CD4-positive, alpha-beta T cell (primary cell): ENCODE measurements at regions of chr3 and their contacts with region 1.

Region 1: DNA sequence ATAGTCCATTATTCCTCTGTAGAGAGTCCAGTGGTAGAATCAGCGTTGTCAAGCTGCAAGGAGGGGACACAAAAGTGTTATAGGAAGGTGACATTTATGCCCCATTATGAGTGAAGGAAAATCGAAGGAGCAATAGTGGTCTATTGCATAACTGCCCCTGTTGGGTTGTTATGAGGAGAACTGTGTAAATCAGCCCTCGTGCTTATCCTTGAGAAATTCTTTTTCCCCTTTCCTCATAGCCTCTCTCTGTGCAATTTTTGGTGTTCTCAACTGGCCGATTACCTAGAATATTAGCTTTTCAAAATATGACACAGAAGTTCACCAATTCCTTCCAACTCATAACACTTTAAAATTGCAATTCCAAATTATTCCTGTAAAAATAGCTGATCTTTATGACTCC is 286.6 kb downstream of the RBMS3 start:
- DNase-seq: no peak
- ATAC-seq: no peak
- H3K4me3 ChIP-seq: no peak overlapping the region
- H3K4me3 Mint-ChIP-seq: no peak overlapping the region
- H3K27ac ChIP-seq: no peak overlapping the region
- H3K27ac Mint-ChIP-seq: no peak overlapping the region
- H3K4me1 ChIP-seq: no peaks in the 10 kb centered on the region
- H3K4me1 Mint-ChIP-seq: no peaks in the 10 kb centered on the region
- H3K27me3 ChIP-seq: no peaks in the 10 kb centered on the region
- H3K27me3 Mint-ChIP-seq: no peaks in the 10 kb centered on the region
- CTCF ChIP-seq: no peak

Region 2: DNA sequence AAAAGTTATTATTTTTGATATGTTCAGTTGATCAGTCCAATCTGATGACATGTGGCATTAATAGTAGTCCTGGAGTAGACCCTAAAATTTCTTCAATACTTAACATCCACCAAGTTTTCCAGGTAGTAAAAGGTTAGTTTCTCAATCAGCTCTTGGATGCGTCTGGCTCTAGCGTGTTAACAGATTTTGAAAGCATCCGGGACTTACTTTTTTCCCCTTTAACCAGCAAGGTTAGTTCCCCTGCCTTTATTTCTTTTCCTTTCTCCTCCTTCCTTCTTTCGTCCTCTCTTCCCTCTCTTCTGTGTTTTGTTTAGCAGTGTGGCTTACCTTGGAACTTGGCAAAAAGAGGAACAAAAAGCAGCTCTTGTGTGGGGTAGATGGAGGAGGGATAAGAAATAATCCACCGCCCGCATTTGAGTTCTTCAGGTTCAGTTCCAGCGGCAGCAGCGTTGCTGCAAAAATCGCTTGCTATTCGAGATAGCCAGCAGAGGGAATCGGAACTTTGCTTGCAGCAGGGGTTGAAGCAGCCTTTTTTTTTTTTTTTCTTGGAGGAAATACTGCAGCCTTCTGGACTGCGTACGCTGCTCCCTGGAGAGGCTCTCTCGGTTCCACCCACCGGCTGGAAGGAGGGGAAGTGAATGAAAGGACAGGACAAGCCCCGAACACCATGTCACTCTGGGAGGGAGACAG is 287.0 kb before region 1 on chr3 and contains the start of gene RBMS3:
- CTCF ChIA-PET with region 1: no interaction called
- POLR2A ChIA-PET with region 1: no interaction called
- intact Hi-C with region 1: no loop called
- DNase-seq: peak in 5 of 14 experiments; percentile 6 to 44 (median 33)
- ATAC-seq: peak; percentile 57
- H3K4me3 ChIP-seq: peak within 1 kb of the TSS; percentile 48
- H3K4me3 Mint-ChIP-seq: peak within 1 kb of the TSS; percentile 75
- H3K27ac ChIP-seq: no peak within 1 kb of the TSS
- H3K27ac Mint-ChIP-seq: peak within 1 kb of the TSS; percentile 59
- H3K4me1 ChIP-seq: peaks cover 10% of the 10 kb centered on the region
- H3K4me1 Mint-ChIP-seq: peaks cover 28% of the 10 kb centered on the region
- H3K27me3 ChIP-seq: peaks cover 0 to 3% of the 10 kb centered on the region in 2 experiments
- H3K27me3 Mint-ChIP-seq: peaks cover 10% of the 10 kb centered on the region
- CTCF ChIP-seq: no peak
- total RNA-seq, gene RBMS3: 1.6 to 1.7 TPM

Region 3: DNA sequence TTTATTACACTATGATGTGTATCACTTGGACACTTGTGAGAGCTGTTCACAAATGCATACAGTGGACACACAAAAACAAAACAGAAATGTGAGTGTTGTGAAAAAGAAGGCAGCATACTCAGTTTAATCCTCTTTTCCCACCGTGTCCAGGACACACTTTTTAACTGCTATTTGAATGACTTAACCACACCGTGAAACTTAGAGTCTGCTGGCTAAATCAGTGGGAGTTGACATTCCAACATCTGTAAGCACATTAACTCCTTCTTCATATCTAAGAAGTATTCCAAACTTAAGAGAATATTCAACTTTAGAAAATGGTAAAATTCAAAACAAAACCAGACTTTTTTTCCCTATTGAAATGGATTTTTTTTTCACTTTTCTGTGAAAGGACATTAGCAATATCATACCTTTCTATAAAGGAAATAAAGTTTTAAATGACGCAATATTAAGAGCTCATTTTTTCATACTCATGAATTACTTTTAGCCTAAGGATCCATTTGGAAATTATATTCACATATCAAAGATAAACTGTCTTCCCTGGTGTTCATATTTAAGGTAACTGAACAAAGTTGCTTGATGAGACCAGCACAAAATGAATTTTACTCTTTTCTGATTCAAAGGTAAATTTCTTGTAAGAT is 30.0 kb after region 1 on chr3:
- CTCF ChIA-PET with region 1: no interaction called
- POLR2A ChIA-PET with region 1: no interaction called
- intact Hi-C with region 1: loop called in 1 of 2 experiments (anchors 1 kb)
- DNase-seq: no peak
- ATAC-seq: no peak
- H3K4me3 ChIP-seq: no peak overlapping the region
- H3K4me3 Mint-ChIP-seq: no peak overlapping the region
- H3K27ac ChIP-seq: no peak overlapping the region
- H3K27ac Mint-ChIP-seq: no peak overlapping the region
- H3K4me1 ChIP-seq: no peaks in the 10 kb centered on the region
- H3K4me1 Mint-ChIP-seq: no peaks in the 10 kb centered on the region
- H3K27me3 ChIP-seq: no peaks in the 10 kb centered on the region
- H3K27me3 Mint-ChIP-seq: no peaks in the 10 kb centered on the region
- CTCF ChIP-seq: no peak